Ascending aorta (tissue), 2 donors: ENCODE measurements at regions of chr22 and their contacts with region 1.

Region 1: DNA sequence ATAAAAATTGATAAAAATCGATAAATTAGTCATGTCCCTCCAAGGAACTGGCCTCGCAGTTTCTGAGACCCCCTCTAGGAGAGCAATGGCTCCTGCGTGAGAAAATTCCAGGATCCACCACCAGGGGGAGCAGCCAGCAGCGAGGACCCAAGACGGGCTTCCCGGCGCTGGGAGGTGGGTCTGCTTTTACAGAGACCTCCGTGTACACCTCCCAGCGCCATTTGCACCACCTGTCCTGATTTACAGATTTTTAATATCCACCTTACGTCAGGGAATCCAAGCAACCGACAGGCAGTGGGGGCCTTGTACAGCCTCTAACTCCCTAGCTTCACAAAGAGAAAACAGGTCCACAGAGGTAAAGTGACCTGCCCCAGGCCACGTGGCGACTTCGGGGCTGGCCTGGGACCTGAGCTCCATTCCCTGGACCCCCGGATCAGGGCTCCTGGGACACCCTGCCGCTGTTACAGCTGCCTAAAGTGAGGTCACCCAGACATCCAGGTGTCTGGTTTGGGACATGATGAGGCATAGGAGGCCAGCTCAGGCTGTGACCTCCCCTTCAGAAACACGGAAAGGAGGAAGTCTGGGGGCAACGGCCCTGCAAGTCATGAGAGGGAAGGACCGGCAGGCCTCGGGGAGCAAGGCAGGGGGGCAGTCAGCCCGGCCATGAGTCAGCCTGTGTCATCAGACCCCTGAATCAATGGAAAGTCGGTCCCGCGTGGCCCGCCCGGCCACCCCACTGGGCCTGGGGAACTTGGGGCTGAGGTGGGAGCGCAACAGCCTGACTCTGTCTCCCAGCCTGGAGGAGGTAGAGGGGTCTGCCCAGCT is 3.5 kb downstream of the OSM start:
- DNase-seq: peak; percentile 61 to 87
- H3K4me3 ChIP-seq: peak overlapping the region in 1 of 2 donors; percentile 31
- H3K27ac ChIP-seq: no peak overlapping the region
- H3K4me1 ChIP-seq: no peaks in the 10 kb centered on the region
- H3K27me3 ChIP-seq: no peaks in the 10 kb centered on the region
- CTCF ChIP-seq: peak; percentile 96 to 98 (median 96)

Region 2: DNA sequence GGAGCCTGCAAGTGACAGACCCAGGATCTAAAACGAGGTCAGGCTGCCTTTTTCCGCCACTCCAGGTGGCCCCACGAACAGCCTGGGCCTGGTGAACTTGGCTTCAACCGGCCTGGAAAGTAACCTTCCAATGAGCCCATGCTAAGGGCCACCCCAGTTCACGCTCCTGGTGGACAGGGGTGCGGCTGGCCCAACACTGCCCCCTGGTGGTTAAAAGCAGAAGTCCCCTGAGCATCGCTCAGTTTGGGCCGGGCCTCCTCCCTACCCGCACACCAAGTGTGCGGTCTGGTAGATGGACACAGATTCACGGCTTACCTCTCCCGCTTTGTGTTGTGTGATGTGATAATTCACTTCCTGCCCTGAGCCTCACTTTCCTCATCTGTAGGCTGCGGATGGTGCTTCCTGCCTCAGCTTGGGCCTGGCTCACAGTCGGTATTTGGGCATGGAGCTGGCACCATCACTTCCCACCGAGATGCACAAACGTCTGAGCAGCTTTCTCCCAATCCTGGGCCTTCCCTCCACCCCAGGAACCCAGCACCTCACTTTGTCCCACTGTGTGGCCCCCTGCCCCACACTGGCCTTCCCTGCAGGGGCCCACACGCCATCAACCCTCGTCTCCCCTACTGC is 222.3 kb after region 1 on chr22:
- intact Hi-C with region 1: loop called (anchors 5 kb)
- DNase-seq: peak in 1 of 2 donors; percentile 72
- H3K4me3 ChIP-seq: no peak overlapping the region
- H3K27ac ChIP-seq: no peak overlapping the region
- H3K4me1 ChIP-seq: no peaks in the 10 kb centered on the region
- H3K27me3 ChIP-seq: no peaks in the 10 kb centered on the region
- CTCF ChIP-seq: peak; percentile 85 to 88 (median 88)